Cardiac septum (tissue), 1 donor: ENCODE measurements at regions of chr17 and their contacts with region 1.

Region 1: DNA sequence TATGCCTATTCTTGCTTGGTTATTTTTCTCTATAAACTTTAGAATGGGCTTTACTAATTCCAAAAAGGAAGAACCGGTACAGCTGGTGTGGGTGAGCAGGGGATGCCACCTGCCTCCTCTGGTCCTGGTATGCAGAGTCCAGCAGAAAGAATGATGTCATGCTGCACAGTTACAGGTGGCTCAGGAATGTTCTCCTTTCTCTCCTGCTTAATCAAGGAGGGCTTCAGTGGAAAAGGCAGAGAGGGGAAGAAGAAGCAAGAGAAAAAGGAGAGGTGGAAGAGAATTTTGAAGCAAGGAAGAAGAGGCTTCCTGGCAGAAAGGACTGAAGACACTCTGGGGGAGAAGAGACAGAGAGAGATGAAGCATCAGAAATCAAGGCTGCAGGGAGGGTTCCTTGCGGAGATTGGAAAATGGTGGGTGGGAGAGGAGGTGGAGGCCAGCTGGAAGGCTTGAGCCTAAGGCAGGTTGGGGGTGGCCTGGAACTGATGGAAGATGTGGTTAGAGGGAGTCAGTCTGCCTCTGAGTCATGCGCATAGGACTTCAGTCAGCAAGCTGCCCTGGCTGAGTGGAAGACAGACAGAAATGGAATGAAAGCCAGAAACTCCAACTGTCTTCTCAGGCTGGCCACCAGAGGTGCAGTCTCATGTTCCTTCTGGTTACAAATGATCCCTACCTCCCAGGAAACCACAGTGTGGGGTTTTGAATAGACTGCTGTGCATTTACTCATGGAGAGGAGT is 64.6 kb upstream of the CRHR1 start:
- DNase-seq: no peak

Region 2: GRCh38 chr17:45834471-45835396 is 115.2 kb after region 1 on chr17:
- intact Hi-C with region 1: loop called (anchors 10 kb)
- DNase-seq: no peak